Heart left ventricle (tissue), 16 donors: ENCODE measurements at regions of chr11 and their contacts with region 1.

Region 1: GRCh38 chr11:94656968-94657367 is 89.8 kb downstream of the PIWIL4 start:
- DNase-seq: no peak
- ATAC-seq: no peak
- H3K4me3 ChIP-seq: no peak overlapping the region
- H3K27ac ChIP-seq: no peak overlapping the region
- H3K4me1 ChIP-seq: peaks cover 0 to 16% (median 0%) of the 10 kb centered on the region in 12 donors
- H3K27me3 ChIP-seq: no peaks in the 10 kb centered on the region
- CTCF ChIP-seq: no peak
- POLR2A ChIP-seq: no peak

Region 2: GRCh38 chr11:94731880-94732601 is 75.1 kb after region 1 on chr11:
- intact Hi-C with region 1: loop called in 2 of 10 experiments (anchors 5 kb)
- DNase-seq: peak in 3 of 5 donors; percentile 26 to 48 (median 42)
- ATAC-seq: peak; percentile 57 to 90 (median 84)
- H3K4me3 ChIP-seq: no peak overlapping the region
- H3K27ac ChIP-seq: peak overlapping the region; percentile 46 to 86 (median 80)
- H3K4me1 ChIP-seq: peaks cover 0 to 39% (median 28%) of the 10 kb centered on the region in 12 donors
- H3K27me3 ChIP-seq: no peaks in the 10 kb centered on the region
- CTCF ChIP-seq: no peak
- POLR2A ChIP-seq: no peak

Region 3: DNA sequence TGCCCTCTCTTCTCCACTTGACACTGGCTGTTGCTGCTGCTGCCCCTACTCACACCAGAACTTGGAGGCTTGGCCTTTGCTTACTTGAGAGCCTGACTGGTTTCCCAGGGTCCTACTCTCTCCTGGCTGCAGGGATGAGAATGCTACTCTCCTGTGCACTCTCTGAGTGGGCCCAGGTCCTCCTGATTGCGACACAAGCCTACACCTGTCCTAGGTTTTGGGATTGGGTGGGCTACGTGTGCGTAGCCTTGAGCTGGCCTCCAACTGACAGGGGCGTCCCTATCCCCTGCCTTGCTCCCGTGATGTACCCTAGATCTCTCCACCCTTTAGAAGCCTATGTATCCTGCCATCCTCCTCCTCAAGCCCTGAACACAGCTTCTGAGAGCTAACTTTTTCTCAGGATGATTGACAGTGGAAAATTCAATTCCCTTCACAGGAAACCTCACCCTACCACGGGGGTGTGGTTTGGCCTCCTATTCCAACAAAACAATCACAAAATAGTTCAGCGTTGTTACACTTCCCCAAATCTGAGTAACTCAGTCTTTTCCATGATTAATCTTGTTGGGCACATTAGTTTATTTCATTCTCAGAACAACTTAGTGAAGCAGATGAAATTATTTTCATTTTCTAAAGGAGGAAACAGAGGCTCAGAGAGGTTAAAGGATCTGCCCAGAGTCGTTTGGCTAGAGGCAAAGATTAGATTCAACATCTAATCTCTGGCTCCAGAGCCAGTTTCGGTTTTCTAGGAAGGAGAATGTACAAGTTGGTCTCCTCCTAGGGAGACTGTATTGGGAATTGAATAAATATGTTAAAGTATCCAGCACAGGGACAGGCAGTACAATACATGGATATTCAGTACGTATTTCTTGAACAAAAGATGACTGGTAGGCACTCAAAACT is 93.6 kb after region 1 on chr11:
- intact Hi-C with region 1: loop called in 1 of 10 experiments (anchors 5 kb)
- DNase-seq: peak in 4 of 5 donors; percentile 33 to 51 (median 34)
- ATAC-seq: peak; percentile 51 to 82 (median 71)
- H3K4me3 ChIP-seq: peak overlapping the region in 7 of 12 donors; percentile 8 to 45 (median 18)
- H3K27ac ChIP-seq: peak overlapping the region; percentile 39 to 81 (median 73)
- H3K4me1 ChIP-seq: peaks cover 0 to 34% (median 14%) of the 10 kb centered on the region in 12 donors
- H3K27me3 ChIP-seq: no peaks in the 10 kb centered on the region
- CTCF ChIP-seq: no peak
- POLR2A ChIP-seq: no peak